Endothelial cell of umbilical vein (primary cell): ENCODE measurements at regions of chr21 and their contacts with region 1.

Region 1: GRCh38 chr21:41133896-41134522 is 34.0 kb upstream of the BACE2 start:
- DNase-seq: peak; percentile 39
- H3K4me3 ChIP-seq: no peak overlapping the region
- H3K27ac ChIP-seq: no peak overlapping the region
- H3K4me1 ChIP-seq: no peaks in the 10 kb centered on the region
- H3K27me3 ChIP-seq: peaks cover 0 to 2% of the 10 kb centered on the region in 2 experiments
- CTCF ChIP-seq: peak; percentile 12 to 40
- POLR2A ChIP-seq: no peak

Region 2: DNA sequence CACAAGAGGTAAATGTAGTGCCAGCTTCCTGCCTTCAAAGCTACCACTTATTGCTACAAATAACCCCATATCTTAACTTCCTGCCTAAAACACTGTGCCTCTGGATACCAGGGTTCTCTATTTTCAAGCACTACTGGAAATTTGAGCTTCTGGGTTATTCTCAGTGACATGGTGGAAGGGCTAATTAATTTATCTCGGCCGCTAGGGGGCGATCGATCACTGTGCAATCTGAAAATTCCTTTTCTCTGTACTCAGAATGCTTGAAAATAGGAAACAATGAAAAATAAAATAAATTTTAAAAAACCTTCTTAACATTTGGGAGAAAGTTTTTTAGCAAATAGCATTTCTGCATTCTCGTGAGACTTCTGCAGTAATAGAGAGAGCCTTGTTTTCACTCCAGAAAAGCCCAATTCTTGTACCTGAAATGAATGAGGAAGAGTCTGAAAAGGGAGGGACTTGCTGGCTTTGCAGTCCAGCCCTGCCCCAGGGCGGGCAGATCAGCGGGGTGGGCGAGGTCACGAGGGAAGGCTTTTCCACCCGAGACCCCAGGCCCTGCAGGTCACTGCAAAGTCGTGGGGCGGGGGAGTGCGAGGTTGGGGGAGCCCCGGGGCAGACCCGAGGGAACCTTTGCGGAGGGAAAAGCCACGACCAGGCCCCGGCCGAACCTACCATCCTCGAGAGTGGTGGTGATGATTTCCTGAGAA is 990.0 kb before region 1 on chr21:
- CTCF ChIA-PET with region 1: interaction called, 9 read pairs
- POLR2A ChIA-PET with region 1: no interaction called
- dilution Hi-C with region 1: no loop called
- intact Hi-C with region 1: loop called (anchors 5 kb)
- DNase-seq: peak; percentile 16
- H3K4me3 ChIP-seq: no peak overlapping the region
- H3K27ac ChIP-seq: no peak overlapping the region
- H3K4me1 ChIP-seq: no peaks in the 10 kb centered on the region
- H3K27me3 ChIP-seq: no peaks in the 10 kb centered on the region
- CTCF ChIP-seq: peak; percentile 41 to 45
- POLR2A ChIP-seq: no peak